Activated CD4-positive, alpha-beta T cell treated with anti-CD3 and anti-CD28 coated beads, Interleukin-2, amount 10 ng/mL, durations not matched to agents 24 days and 14 days (primary cell): ENCODE measurements at regions of chr10 and their contacts with region 1.

Region 1: DNA sequence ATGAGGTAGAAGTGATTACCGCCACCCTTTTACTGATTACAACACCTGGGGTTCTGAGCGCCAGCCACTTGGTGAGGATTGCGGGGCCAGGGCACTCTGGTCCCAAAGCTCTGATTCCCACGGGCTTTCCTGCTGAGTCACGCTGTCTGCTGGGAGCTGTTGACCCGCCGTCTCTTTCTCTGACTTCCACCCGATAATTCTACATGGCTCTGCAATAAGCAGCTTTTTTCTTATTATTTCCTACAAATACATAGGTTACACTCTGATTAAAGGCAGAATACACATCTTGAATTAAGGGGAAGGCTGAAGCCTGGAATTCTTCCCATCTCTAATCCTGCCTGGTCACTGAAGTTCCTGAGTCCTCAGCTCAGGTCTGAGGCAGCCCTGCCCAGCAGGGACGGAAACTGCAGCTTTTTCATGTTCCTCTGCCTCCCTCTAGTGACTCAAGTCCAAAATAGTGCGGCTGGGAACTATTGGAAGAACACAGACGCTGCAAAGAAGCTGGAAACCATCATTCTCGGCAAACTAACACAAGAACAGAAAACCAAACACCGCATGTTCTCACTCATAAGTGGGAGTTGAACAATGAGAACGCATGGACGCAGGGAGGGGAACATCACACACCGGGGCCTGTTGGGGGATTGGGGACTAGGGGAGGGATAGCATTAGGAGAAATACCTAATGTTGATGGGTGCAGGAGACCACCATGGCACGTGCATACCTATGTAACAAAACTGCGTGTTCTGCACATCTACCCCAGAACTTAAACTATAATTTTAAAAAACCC is 178.3 kb downstream of the PRKCQ start:
- DNase-seq: peak; percentile 90
- H3K4me3 Mint-ChIP-seq: peak overlapping the region; percentile 24
- H3K27ac Mint-ChIP-seq: peak overlapping the region; percentile 16
- H3K4me1 Mint-ChIP-seq: peaks cover 27% of the 10 kb centered on the region
- H3K27me3 Mint-ChIP-seq: peaks cover 3% of the 10 kb centered on the region

Region 2: DNA sequence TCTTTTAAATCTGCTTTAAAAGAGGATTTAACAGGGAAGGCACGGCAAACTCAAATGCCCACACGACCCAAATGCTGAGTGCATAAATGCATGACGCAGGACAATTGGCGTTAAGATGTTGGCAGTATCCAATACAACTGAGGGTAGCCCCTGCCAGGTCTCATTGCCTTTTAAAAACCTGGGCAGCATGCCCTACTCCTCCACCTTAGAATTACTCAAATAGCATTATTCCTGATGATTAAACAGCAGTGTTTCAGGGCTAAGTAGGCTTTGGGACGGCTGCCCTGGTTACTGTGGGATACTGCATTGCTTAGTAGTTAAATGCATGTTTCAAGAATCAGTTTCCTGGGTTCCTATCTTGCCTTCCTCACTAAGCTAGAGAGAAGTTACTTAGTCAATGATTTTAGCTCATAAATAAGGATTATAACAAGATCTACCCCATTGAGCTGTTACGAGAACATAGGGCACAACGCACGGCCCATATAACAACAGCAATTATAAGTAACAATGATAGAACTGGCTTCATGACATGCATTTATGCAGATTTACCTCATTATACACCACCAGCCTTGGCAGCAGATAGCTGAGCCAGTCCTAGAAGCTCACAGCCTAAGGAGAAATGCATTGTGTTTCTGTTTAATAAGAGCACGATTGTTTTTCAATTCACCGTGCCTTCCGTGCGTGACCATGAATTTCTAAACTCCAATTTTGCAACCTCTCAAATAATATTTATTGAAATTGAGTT is 1005.0 kb before region 1 on chr10:
- intact Hi-C with region 1: no loop called
- DNase-seq: no peak
- H3K4me3 Mint-ChIP-seq: no peak overlapping the region
- H3K27ac Mint-ChIP-seq: no peak overlapping the region
- H3K4me1 Mint-ChIP-seq: no peaks in the 10 kb centered on the region
- H3K27me3 Mint-ChIP-seq: peaks cover 21% of the 10 kb centered on the region

Region 3: DNA sequence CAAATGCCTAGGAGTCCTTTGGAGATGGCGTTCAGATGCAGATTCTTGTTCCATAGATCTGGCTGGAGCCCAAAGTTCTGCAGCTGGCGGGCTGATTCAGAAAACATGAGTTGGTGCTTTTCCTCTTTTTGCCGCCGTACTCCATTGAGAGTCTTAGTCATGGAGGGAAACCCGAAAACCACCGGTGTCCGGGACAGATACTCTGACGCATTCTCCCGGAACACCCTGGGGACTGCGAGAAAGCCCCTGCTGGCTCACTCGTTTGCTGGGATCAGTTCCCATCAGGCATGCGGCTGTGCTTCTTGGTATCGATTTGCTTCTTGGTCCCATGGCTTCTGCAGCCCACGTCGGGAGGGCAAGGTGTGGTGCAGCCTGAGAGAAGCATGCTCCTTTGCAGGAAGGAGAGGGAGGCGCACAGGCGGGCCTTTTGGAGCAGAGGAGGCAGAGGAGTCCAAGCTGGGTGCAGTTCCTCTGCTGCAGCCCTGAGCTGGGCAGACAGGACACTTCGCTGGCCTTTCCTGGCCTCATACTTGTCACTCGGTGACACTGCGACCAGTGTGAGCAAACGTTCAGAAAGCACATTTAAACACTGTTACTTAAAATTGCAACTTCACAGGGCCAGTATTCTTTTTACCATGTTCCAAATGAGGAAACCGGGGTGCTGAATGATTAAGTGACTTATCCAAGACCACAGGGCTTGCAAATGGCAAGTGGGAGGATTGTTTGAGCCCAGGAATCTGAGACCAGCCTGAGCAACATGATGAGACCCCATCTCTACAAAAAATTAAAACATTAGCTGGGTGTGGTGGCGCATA is 229.7 kb before region 1 on chr10:
- intact Hi-C with region 1: loop called (anchors 2 kb)
- DNase-seq: peak; percentile 77
- H3K4me3 Mint-ChIP-seq: peak overlapping the region; percentile 74
- H3K27ac Mint-ChIP-seq: peak overlapping the region; percentile 85
- H3K4me1 Mint-ChIP-seq: peaks cover 79% of the 10 kb centered on the region
- H3K27me3 Mint-ChIP-seq: no peaks in the 10 kb centered on the region

Region 4: DNA sequence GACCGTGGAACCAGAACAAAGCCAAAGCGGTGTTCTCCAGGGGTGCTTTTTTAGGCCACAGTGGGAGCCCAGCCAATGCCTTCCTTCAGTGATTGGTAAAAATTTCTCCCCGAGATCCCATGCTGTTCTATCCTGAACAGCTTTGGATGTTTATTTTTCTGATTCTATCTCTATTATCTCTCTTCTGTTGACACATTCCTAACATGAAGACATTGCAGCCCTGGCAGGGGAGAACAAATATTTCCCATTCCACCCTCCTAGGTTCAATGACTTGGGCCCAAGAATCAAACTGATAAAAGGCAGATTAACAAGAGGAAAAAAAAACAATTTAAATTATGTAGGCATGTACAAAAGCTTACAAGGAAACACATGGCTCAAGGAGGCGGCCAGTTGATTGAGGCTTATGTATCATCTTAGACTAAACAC is 36.4 kb before region 1 on chr10:
- intact Hi-C with region 1: no loop called
- DNase-seq: no peak
- H3K4me3 Mint-ChIP-seq: no peak overlapping the region
- H3K27ac Mint-ChIP-seq: no peak overlapping the region
- H3K4me1 Mint-ChIP-seq: no peaks in the 10 kb centered on the region
- H3K27me3 Mint-ChIP-seq: no peaks in the 10 kb centered on the region

Region 5: GRCh38 chr10:6498771-6499170 is 97.0 kb after region 1 on chr10:
- intact Hi-C with region 1: no loop called
- DNase-seq: peak; percentile 89
- H3K4me3 Mint-ChIP-seq: peak overlapping the region; percentile 78
- H3K27ac Mint-ChIP-seq: peak overlapping the region; percentile 84
- H3K4me1 Mint-ChIP-seq: peaks cover 42% of the 10 kb centered on the region
- H3K27me3 Mint-ChIP-seq: no peaks in the 10 kb centered on the region